ENCODE measurements at regions of chr17 and their contacts with region 1.

Region 1: DNA sequence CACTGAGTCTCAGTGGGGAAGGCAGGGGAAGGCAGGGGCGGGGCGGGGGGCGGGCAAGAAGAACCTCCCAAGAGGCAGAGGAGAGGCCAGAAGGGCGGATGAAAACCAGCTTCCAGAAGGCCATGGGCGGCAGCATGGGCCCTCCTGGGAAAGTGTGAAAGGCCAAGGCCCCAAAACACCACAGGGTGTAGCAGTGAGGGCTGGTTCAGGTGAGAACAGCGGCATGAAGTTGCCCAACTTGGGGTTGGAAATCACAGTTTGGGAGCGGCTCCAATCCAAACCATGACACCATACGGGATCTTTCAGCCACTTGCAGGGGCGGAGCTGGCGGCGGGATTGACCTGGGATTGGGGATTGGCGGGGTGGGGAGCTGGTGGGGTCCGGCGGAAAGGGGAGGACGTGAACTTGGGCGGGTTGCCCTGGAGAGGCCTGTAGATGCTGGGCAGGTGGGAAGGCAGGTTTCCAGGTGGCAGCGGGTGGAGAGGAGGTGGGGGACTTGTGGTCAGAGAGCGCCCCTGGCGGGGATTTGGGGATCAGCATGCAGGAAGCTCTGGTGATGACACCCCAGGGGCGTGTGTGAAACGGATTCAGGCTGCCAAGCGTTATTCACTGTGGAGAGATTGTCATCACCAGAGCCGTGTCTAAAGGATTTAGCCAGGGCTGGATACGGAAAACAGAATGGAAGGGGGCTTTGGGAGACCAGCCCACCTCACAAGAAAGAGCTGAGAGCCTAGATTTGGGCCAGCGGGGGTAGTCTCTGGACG is 80.9 kb downstream of the ARHGAP23 start:
- DNase-seq: peak; percentile 97
- ATAC-seq: peak; percentile 69
- H3K4me3 Mint-ChIP-seq: peak overlapping the region; percentile 79
- H3K27ac Mint-ChIP-seq: no peak overlapping the region
- H3K4me1 Mint-ChIP-seq: peaks cover 33% of the 10 kb centered on the region
- H3K27me3 Mint-ChIP-seq: peaks cover 33% of the 10 kb centered on the region
- CTCF ChIP-seq: peak; percentile 93

Region 2: DNA sequence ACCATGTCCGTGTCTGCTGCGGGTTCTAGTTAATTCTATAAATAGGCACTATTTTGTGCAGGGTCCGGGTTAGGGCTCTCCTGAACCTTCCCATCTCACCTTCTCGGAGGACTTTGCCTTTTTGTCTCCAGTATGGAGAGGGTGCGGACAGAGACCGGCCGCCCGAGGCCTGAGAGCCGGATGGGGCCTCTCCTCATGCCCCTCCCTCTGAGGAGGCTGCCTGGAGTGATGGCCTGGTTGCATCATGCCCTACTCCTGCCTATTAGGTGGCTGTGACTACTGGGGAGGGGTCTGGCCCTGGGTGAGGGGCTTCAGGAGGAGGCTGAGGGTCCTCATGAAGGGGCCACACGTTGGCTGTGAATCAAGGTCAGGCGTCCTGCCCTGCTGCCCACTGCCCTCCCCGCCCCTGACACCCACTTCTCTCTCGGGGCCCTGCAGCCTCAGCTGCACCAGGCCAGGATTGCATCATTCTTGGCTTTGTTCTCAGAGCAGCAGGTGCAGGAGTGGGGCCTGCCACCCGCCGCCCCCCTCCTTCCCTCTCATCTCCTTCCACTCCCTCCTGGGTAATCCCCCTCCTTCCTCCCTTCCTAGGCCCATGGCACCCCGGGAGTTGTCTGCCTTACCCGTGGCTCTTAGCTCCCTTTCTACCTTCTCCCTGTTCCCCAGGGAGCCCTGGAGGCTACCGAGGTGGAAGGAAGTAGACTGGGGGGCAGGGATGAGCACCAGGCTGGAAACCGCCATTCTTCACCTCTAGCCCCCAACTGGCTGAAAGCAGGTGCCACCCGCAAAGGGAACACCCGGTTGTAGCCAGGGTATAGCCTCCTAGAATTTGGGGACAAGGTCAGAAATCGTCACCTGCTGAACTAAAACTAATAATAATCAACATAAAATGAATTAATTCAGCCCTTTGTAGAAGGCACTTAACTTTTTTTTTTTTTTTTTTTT is 93.7 kb before region 1 on chr17:
- CTCF ChIA-PET with region 1: interaction called, 22 read pairs
- POLR2A ChIA-PET with region 1: interaction called, 8 read pairs
- DNase-seq: peak; percentile 69
- ATAC-seq: peak; percentile 43
- H3K4me3 Mint-ChIP-seq: peak overlapping the region; percentile 61
- H3K27ac Mint-ChIP-seq: peak overlapping the region; percentile 91
- H3K4me1 Mint-ChIP-seq: peaks cover 59% of the 10 kb centered on the region
- H3K27me3 Mint-ChIP-seq: peaks cover 29% of the 10 kb centered on the region
- CTCF ChIP-seq: no peak

Region 3: GRCh38 chr17:38539386-38539785 is 30.2 kb after region 1 on chr17:
- CTCF ChIA-PET with region 1: interaction called, 71 read pairs
- POLR2A ChIA-PET with region 1: interaction called, 6 read pairs
- DNase-seq: no peak
- ATAC-seq: no peak
- H3K4me3 Mint-ChIP-seq: no peak overlapping the region
- H3K27ac Mint-ChIP-seq: no peak overlapping the region
- H3K4me1 Mint-ChIP-seq: peaks cover 19% of the 10 kb centered on the region
- H3K27me3 Mint-ChIP-seq: peaks cover 27% of the 10 kb centered on the region
- CTCF ChIP-seq: no peak

Region 4: GRCh38 chr17:38598536-38598935 is 89.3 kb after region 1 on chr17:
- CTCF ChIA-PET with region 1: interaction called, 10 read pairs
- POLR2A ChIA-PET with region 1: interaction called, 4 read pairs
- DNase-seq: peak; percentile 92
- ATAC-seq: peak; percentile 85
- H3K4me3 Mint-ChIP-seq: peak overlapping the region; percentile 35; the same call in 1 of the 2 replicates
- H3K27ac Mint-ChIP-seq: peak overlapping the region; percentile 87
- H3K4me1 Mint-ChIP-seq: peaks cover 91% of the 10 kb centered on the region
- H3K27me3 Mint-ChIP-seq: peaks cover 46% of the 10 kb centered on the region
- CTCF ChIP-seq: no peak

Region 5: GRCh38 chr17:38674749-38675615 is 165.8 kb after region 1 on chr17 and contains the start of gene EPOP:
- CTCF ChIA-PET with region 1: interaction called, 74 read pairs
- POLR2A ChIA-PET with region 1: no interaction called
- DNase-seq: peak; percentile 89
- ATAC-seq: peak; percentile 62
- H3K4me3 Mint-ChIP-seq: peak within 1 kb of the TSS; percentile 54
- H3K27ac Mint-ChIP-seq: no peak within 1 kb of the TSS
- H3K4me1 Mint-ChIP-seq: peaks cover 35% of the 10 kb centered on the region
- H3K27me3 Mint-ChIP-seq: peaks cover 77% of the 10 kb centered on the region
- CTCF ChIP-seq: no peak
- total RNA-seq, gene EPOP: 8.7 to 12.3 TPM (median 9.0 TPM) in 3 replicates